ENCODE measurements at regions of chr3 and their contacts with region 1.

Region 1: DNA sequence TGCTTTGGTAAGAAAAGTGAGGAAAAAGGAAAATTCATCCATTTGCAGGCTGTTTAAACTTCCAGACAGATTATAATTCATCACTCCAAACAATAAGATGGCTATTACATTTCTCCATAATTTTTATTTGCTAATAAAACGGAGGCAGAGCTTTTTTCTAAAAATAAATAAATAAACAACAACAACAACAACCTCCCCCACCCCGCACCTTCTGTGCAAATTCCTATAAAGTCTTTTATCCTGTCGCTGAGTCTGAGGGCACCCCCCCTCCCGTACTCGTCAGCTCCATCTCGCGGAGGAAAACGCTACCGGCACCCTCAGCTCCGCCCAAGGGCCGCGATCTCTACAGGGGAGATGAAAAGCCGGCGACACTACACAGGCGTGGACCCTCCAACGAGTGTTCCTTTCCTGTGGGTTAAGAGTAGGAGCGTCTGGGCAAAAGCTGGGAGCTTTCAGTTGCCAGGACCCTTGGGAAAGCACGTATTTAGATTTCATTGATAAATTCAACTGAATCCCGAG is 1.0 kb upstream of the ATP1B3 start:
- DNase-seq: peak; percentile 71 to 91 (median 78)
- ATAC-seq: peak; percentile 65
- H3K4me3 ChIP-seq: peak overlapping the region; percentile 83
- H3K4me3 Mint-ChIP-seq: peak overlapping the region; percentile 92
- H3K27ac ChIP-seq: peak overlapping the region; percentile 90 to 98
- H3K27ac Mint-ChIP-seq: peak overlapping the region; percentile 93
- H3K4me1 ChIP-seq: peaks cover 11% of the 10 kb centered on the region
- H3K4me1 Mint-ChIP-seq: peaks cover 29% of the 10 kb centered on the region
- H3K27me3 ChIP-seq: no peaks in the 10 kb centered on the region
- H3K27me3 Mint-ChIP-seq: no peaks in the 10 kb centered on the region
- CTCF ChIP-seq: peak; percentile 90

Region 2: DNA sequence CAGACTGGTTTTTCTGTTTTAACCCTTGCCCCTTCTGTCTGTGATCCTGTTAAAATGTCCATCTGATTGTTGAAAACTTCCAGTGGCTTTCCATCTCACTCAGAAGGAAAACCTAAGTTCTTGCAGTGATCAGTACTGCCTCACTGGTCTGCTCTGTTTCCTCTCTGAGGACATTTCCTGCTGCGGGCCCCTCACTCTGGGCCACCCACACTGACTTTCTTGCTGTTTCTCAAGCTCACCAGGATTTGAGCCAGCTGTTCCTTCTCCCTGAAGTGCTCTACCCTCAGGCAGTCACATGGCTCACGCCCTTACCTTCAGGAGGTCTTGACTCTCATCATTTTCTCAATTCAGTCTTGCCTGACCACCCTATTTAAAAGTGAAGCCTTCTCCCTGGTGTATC is 110.4 kb before region 1 on chr3:
- CTCF ChIA-PET with region 1: no interaction called
- POLR2A ChIA-PET with region 1: no interaction called
- intact Hi-C with region 1: no loop called
- DNase-seq: no peak
- ATAC-seq: no peak
- H3K4me3 ChIP-seq: no peak overlapping the region
- H3K4me3 Mint-ChIP-seq: no peak overlapping the region
- H3K27ac ChIP-seq: no peak overlapping the region
- H3K27ac Mint-ChIP-seq: no peak overlapping the region
- H3K4me1 ChIP-seq: no peaks in the 10 kb centered on the region
- H3K4me1 Mint-ChIP-seq: no peaks in the 10 kb centered on the region
- H3K27me3 ChIP-seq: no peaks in the 10 kb centered on the region
- H3K27me3 Mint-ChIP-seq: no peaks in the 10 kb centered on the region
- CTCF ChIP-seq: no peak

Region 3: GRCh38 chr3:141796081-141796888 is 79.1 kb before region 1 on chr3:
- CTCF ChIA-PET with region 1: interaction called, 22 read pairs
- POLR2A ChIA-PET with region 1: interaction called, 63 read pairs
- intact Hi-C with region 1: loop called (anchors 1 to 2 kb)
- DNase-seq: peak; percentile 23 to 81 (median 48)
- ATAC-seq: peak; percentile 74
- H3K4me3 ChIP-seq: peak overlapping the region; percentile 53
- H3K4me3 Mint-ChIP-seq: peak overlapping the region; percentile 83
- H3K27ac ChIP-seq: peak overlapping the region; percentile 88 to 89
- H3K27ac Mint-ChIP-seq: peak overlapping the region; percentile 93
- H3K4me1 ChIP-seq: peaks cover 56% of the 10 kb centered on the region
- H3K4me1 Mint-ChIP-seq: peaks cover 63% of the 10 kb centered on the region
- H3K27me3 ChIP-seq: no peaks in the 10 kb centered on the region
- H3K27me3 Mint-ChIP-seq: no peaks in the 10 kb centered on the region
- CTCF ChIP-seq: no peak

Region 4: GRCh38 chr3:141913150-141913811 is 37.8 kb after region 1 on chr3:
- CTCF ChIA-PET with region 1: interaction called, 9 read pairs
- POLR2A ChIA-PET with region 1: interaction called, 16 read pairs
- intact Hi-C with region 1: loop called (anchors 2 to 5 kb)
- DNase-seq: peak in 12 of 14 experiments; percentile 16 to 80 (median 34)
- ATAC-seq: peak; percentile 90
- H3K4me3 ChIP-seq: no peak overlapping the region
- H3K4me3 Mint-ChIP-seq: no peak overlapping the region
- H3K27ac ChIP-seq: no peak overlapping the region
- H3K27ac Mint-ChIP-seq: no peak overlapping the region
- H3K4me1 ChIP-seq: no peaks in the 10 kb centered on the region
- H3K4me1 Mint-ChIP-seq: peaks cover 4% of the 10 kb centered on the region
- H3K27me3 ChIP-seq: no peaks in the 10 kb centered on the region
- H3K27me3 Mint-ChIP-seq: no peaks in the 10 kb centered on the region
- CTCF ChIP-seq: peak; percentile 71

Region 5: GRCh38 chr3:142028243-142028777 is 152.9 kb after region 1 on chr3:
- CTCF ChIA-PET with region 1: no interaction called
- POLR2A ChIA-PET with region 1: no interaction called
- intact Hi-C with region 1: loop called in 1 of 2 experiments (anchors 5 kb)
- DNase-seq: peak in 5 of 14 experiments; percentile 10 to 70 (median 63)
- ATAC-seq: peak; percentile 88
- H3K4me3 ChIP-seq: peak overlapping the region; percentile 42
- H3K4me3 Mint-ChIP-seq: peak overlapping the region; percentile 96
- H3K27ac ChIP-seq: no peak overlapping the region
- H3K27ac Mint-ChIP-seq: peak overlapping the region; percentile 46
- H3K4me1 ChIP-seq: no peaks in the 10 kb centered on the region
- H3K4me1 Mint-ChIP-seq: peaks cover 36% of the 10 kb centered on the region
- H3K27me3 ChIP-seq: no peaks in the 10 kb centered on the region
- H3K27me3 Mint-ChIP-seq: no peaks in the 10 kb centered on the region
- CTCF ChIP-seq: no peak

Region 6: GRCh38 chr3:142148792-142149672 is 273.6 kb after region 1 on chr3 and contains the start of gene TFDP2:
- CTCF ChIA-PET with region 1: no interaction called
- POLR2A ChIA-PET with region 1: interaction called, 3 read pairs
- intact Hi-C with region 1: loop called in 1 of 2 experiments (anchors 10 kb)
- DNase-seq: peak; percentile 66 to 92 (median 81)
- ATAC-seq: peak; percentile 99
- H3K4me3 ChIP-seq: peak within 1 kb of the TSS; percentile 70
- H3K4me3 Mint-ChIP-seq: peak within 1 kb of the TSS; percentile 97
- H3K27ac ChIP-seq: peak within 1 kb of the TSS in 1 of 2 donors; percentile 16
- H3K27ac Mint-ChIP-seq: peak within 1 kb of the TSS; percentile 77
- H3K4me1 ChIP-seq: peaks cover 16% of the 10 kb centered on the region
- H3K4me1 Mint-ChIP-seq: peaks cover 33% of the 10 kb centered on the region
- H3K27me3 ChIP-seq: no peaks in the 10 kb centered on the region
- H3K27me3 Mint-ChIP-seq: no peaks in the 10 kb centered on the region
- CTCF ChIP-seq: no peak
- total RNA-seq, gene TFDP2: 33.1 to 34.2 TPM

Region 7: DNA sequence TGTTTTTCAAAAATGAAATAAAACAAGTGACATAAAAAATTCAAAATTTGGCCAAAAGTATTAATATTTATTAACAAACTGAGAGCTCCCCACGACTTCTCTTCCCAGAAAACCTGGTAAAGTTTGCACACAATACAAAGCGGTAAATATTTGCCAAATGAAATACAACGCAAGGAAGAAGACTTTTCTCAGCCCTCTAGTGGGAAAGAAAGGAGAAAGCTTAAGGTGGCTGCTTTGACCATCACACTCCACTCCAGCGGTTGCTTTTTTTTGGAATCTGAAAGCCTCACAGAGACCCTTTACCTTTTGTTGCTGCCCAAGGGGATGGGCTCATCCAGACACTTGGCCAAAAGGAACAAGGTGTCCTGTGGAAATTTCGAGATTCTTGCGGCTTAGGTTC is 351.1 kb after region 1 on chr3:
- CTCF ChIA-PET with region 1: no interaction called
- POLR2A ChIA-PET with region 1: no interaction called
- intact Hi-C with region 1: loop called in 1 of 2 experiments (anchors 10 kb)
- DNase-seq: peak in 1 of 14 experiments; percentile 10
- ATAC-seq: no peak
- H3K4me3 ChIP-seq: no peak overlapping the region
- H3K4me3 Mint-ChIP-seq: peak overlapping the region; percentile 95
- H3K27ac ChIP-seq: no peak overlapping the region
- H3K27ac Mint-ChIP-seq: no peak overlapping the region
- H3K4me1 ChIP-seq: peaks cover 10% of the 10 kb centered on the region
- H3K4me1 Mint-ChIP-seq: peaks cover 22% of the 10 kb centered on the region
- H3K27me3 ChIP-seq: no peaks in the 10 kb centered on the region
- H3K27me3 Mint-ChIP-seq: no peaks in the 10 kb centered on the region
- CTCF ChIP-seq: no peak